Activated T-helper 2 cell treated with anti-CD3 and anti-CD28 coated beads, Interferon-gamma antibody, Interleukin-2, Interleukin-4, amounts not matched to agents 10 μg/mL and 5 μg/mL and 100 μg/mL, durations not matched to agents 14 hours and 24 hours and 36 hours (primary cell): ENCODE measurements at regions of chr1 and their contacts with region 1.

Region 1: GRCh38 chr1:89358287-89358893 is 5.5 kb upstream of the GBP6 start:
- DNase-seq: peak; percentile 73
- H3K4me3 Mint-ChIP-seq: no peak overlapping the region
- H3K27ac Mint-ChIP-seq: peak overlapping the region; percentile 7
- H3K4me1 Mint-ChIP-seq: peaks cover 45% of the 10 kb centered on the region
- H3K27me3 Mint-ChIP-seq: peaks cover 12% of the 10 kb centered on the region

Region 2: DNA sequence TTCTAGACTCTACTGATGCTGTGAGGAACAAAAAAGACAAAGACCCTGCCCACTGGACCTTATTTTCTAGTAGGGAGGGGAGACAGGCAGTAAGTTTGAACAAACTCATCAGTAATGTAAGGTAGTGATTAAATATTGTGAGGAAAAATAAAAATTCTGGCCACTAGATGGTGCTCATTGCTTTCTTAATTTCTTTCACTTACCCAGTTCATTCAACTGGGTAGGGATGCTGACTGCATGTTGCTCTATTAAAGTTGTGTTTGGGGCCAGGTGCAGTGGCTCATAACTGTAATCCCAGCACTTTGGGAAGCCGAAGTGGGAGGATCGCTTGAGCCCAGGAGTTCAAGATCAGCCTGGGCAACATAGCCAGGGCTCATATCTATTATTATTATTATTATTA is 359.7 kb before region 1 on chr1:
- intact Hi-C with region 1: loop called (anchors 1 kb)
- DNase-seq: no peak
- H3K4me3 Mint-ChIP-seq: no peak overlapping the region
- H3K27ac Mint-ChIP-seq: no peak overlapping the region
- H3K4me1 Mint-ChIP-seq: peaks cover 13% of the 10 kb centered on the region
- H3K27me3 Mint-ChIP-seq: peaks cover 4% of the 10 kb centered on the region

Region 3: GRCh38 chr1:89125913-89126580 is 232.3 kb before region 1 on chr1 and contains the start of gene GBP2:
- intact Hi-C with region 1: loop called (anchors 1 kb)
- DNase-seq: no peak
- H3K4me3 Mint-ChIP-seq: peak within 1 kb of the TSS; percentile 97
- H3K27ac Mint-ChIP-seq: peak within 1 kb of the TSS; percentile 99
- H3K4me1 Mint-ChIP-seq: peaks cover 61% of the 10 kb centered on the region
- H3K27me3 Mint-ChIP-seq: no peaks in the 10 kb centered on the region
- total RNA-seq, gene GBP2: 71.9 and 74.1 TPM in 2 replicates

Region 4: GRCh38 chr1:89259283-89259971 is 99.0 kb before region 1 on chr1:
- intact Hi-C with region 1: loop called (anchors 5 kb)
- DNase-seq: peak; percentile 35
- H3K4me3 Mint-ChIP-seq: peak overlapping the region; percentile 27
- H3K27ac Mint-ChIP-seq: peak overlapping the region; percentile 56
- H3K4me1 Mint-ChIP-seq: peaks cover 48% of the 10 kb centered on the region
- H3K27me3 Mint-ChIP-seq: no peaks in the 10 kb centered on the region

Region 5: DNA sequence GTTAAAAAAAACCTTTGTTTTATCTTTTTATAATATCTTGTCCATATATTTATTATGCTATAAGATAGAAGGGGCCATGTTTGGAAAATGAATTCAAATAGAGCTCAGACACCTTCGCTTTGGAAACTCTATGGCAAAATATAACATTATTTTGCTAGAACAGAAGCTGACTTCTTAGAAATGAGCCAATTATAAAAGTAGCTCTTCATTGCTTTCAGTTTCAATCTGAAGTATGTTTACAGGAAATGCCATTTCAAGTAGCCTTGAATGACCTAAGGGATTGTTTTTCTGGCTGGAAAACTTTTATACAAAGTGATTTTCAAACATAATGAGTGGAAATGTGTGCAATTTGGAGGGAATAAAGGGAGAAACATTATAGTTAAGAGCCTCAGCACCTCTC is 47.9 kb before region 1 on chr1:
- intact Hi-C with region 1: loop called (anchors 5 kb)
- DNase-seq: no peak
- H3K4me3 Mint-ChIP-seq: no peak overlapping the region
- H3K27ac Mint-ChIP-seq: peak overlapping the region; percentile 79
- H3K4me1 Mint-ChIP-seq: peaks cover 41% of the 10 kb centered on the region
- H3K27me3 Mint-ChIP-seq: no peaks in the 10 kb centered on the region

Region 6: GRCh38 chr1:89444791-89445190 is 86.4 kb after region 1 on chr1:
- intact Hi-C with region 1: no loop called
- DNase-seq: no peak
- H3K4me3 Mint-ChIP-seq: no peak overlapping the region
- H3K27ac Mint-ChIP-seq: no peak overlapping the region
- H3K4me1 Mint-ChIP-seq: peaks cover under 1% of the 10 kb centered on the region
- H3K27me3 Mint-ChIP-seq: peaks cover 36% of the 10 kb centered on the region